ENCODE measurements at regions of chr1 and their contacts with region 1.

Region 1: GRCh38 chr1:154256686-154257085 is 15.7 kb upstream of the HAX1 start:
- DNase-seq: no peak
- H3K4me3 ChIP-seq: no peak overlapping the region
- CTCF ChIP-seq: no peak

Region 2: GRCh38 chr1:153841463-153841994 is 415.2 kb before region 1 on chr1:
- CTCF ChIA-PET with region 1: no interaction called
- POLR2A ChIA-PET with region 1: no interaction called
- DNase-seq: peak; percentile 19
- H3K4me3 ChIP-seq: no peak overlapping the region
- CTCF ChIP-seq: no peak

Region 3: GRCh38 chr1:154272217-154272998 is 15.7 kb after region 1 on chr1 and contains the start of gene HAX1:
- CTCF ChIA-PET with region 1: interaction called, 22 read pairs
- POLR2A ChIA-PET with region 1: no interaction called
- DNase-seq: peak; percentile 75
- H3K4me3 ChIP-seq: peak within 1 kb of the TSS; percentile 97
- CTCF ChIP-seq: peak; percentile 78